Dorsolateral prefrontal cortex (tissue), 120 donors: ENCODE measurements at regions of chr5 and their contacts with region 1.

Region 1: DNA sequence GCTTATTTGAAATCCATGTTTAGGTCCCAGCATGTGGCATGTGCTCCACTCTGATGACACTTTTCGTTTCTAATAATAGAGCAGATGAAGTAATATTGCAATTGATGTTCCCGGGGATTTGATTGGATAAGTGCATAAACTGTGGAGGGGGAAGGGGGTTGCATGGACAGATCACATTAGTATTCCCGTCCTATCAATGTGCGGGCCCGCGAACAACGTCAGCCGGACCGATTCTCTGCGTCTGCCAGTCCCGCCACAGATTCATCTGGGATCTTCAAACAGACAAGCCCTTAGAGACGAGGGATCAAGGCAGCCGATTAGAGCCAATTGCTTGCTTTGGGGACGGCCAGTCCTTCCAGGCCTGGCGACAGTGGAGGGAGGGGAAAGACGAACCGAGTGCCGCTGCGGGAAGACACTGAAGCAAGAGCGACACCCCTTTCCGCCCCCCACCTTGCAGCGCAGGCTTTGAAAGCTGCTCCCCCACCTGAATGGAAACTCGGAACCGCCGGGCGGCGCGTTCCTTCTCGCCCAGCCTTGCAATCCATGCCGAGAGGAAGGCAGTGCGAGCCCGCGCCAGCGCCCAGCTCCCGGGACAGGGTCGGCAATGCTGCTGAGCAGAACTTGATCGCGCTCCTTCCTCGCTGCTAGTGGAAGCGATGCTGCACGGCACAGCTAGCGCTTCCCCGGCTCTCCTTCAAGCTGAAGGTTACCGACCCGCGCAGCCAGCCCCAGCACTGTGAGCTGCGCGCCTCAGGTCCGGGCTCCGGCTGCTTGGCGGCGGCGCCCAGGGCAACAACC is at the start of gene RGS7BP:
- DNase-seq: peak; percentile 43 to 90 (median 78)
- H3K4me3 ChIP-seq: peak within 1 kb of the TSS; percentile 42 to 85 (median 70)
- H3K27ac ChIP-seq: peak within 1 kb of the TSS in 58 of 59 donors; percentile 49 to 94 (median 85)
- H3K27me3 ChIP-seq: peaks cover 0 to 8% (median 0%) of the 10 kb centered on the region in 45 donors
- CTCF ChIP-seq: peak in 10 of 56 donors; percentile 4 to 23 (median 20)
- total RNA-seq, gene RGS7BP: 29.5 to 146 (median 93.3) TPM

Region 2: DNA sequence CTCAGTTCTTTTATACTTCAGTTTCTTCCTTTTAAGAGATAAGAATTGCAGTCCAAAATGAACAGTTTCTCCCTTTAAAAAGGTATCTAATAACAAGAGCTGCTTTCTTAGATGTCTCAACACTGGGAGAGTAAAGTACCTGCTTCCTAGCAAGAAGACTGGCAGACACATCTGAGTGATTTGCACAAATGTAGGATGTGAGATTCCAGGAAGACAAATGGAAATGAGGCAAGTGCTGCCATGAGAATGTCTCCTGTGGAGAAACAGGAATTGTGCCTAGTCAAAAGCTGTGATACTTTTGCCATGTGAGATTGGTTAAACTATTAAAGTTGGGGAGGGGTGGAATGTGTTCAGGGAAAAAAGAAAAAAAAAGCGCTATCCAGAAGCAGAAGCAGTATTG is 702.8 kb before region 1 on chr5:
- intact Hi-C with region 1: no loop called
- DNase-seq: no peak
- H3K4me3 ChIP-seq: no peak overlapping the region
- H3K27ac ChIP-seq: no peak overlapping the region
- H3K27me3 ChIP-seq: no peaks in the 10 kb centered on the region
- CTCF ChIP-seq: no peak

Region 3: GRCh38 chr5:64576250-64576649 is 70.3 kb after region 1 on chr5:
- intact Hi-C with region 1: loop called in 1 of 2 experiments (anchors 10 kb)
- DNase-seq: no peak
- H3K4me3 ChIP-seq: peak overlapping the region in 44 of 59 donors; percentile 2 to 54 (median 32)
- H3K27ac ChIP-seq: peak overlapping the region in 18 of 59 donors; percentile 0 to 81 (median 50)
- H3K27me3 ChIP-seq: no peaks in the 10 kb centered on the region
- CTCF ChIP-seq: no peak

Region 4: DNA sequence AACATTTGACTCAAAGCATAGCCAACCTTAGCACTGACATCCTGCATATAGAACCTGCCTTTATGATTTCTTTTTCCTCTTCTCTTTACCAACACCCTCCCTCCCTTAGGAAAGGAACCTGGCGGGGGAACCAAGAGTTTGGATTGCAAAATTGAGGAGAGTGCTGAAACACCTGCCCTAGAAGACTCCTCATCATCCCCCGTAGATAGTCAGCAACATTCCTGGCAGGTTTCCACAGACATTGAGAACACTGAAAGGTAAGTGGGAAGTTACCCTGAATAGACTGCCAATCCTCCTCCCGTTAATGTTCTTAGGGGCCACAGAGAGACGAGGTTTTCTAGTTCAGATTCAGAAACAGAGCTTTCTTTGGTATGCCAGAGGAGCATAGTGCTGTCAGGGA is 88.6 kb after region 1 on chr5:
- intact Hi-C with region 1: loop called in 1 of 2 experiments (anchors 5 kb)
- DNase-seq: no peak
- H3K4me3 ChIP-seq: no peak overlapping the region
- H3K27ac ChIP-seq: peak overlapping the region in 21 of 59 donors; percentile 4 to 71 (median 39)
- H3K27me3 ChIP-seq: no peaks in the 10 kb centered on the region
- CTCF ChIP-seq: no peak

Region 5: DNA sequence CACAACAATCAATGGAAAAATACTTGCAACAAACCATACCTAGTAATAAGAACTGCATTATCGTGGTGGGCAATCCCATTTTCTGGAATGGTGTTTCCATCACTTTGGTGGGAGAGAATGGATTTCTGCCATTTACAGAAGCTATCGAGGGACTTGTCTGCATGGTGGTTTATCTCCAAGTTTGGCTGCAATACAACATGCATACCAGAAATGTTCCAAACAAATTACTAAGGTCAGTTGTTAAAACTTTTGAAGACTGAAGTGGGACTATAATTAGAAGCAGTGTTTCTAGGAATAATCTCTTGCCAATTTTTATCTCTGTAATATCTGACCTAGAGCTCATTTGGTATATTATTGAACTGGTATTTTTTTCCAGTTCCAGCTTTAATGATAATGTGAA is 945.5 kb after region 1 on chr5:
- intact Hi-C with region 1: no loop called
- DNase-seq: no peak
- H3K4me3 ChIP-seq: no peak overlapping the region
- H3K27ac ChIP-seq: no peak overlapping the region
- H3K27me3 ChIP-seq: no peaks in the 10 kb centered on the region
- CTCF ChIP-seq: no peak